T-cell (primary cell): ENCODE measurements at regions of chr17 and their contacts with region 1.

Region 1: GRCh38 chr17:1716076-1716995 is 6.2 kb upstream of the TLCD2 start:
- DNase-seq: peak; percentile 99 to 100 (median 100)
- ATAC-seq: peak; percentile 85 to 92 (median 88)
- H3K4me3 ChIP-seq: peak overlapping the region; percentile 79 to 95
- H3K4me3 Mint-ChIP-seq: peak overlapping the region; percentile 88 to 97 (median 89)
- H3K27ac ChIP-seq: peak overlapping the region; percentile 93
- H3K27ac Mint-ChIP-seq: peak overlapping the region; percentile 96 to 97
- H3K4me1 ChIP-seq: peaks cover 11 to 52% of the 10 kb centered on the region in 2 experiments
- H3K4me1 Mint-ChIP-seq: peaks cover 36 to 43% (median 38%) of the 10 kb centered on the region in 3 donors
- H3K27me3 ChIP-seq: peaks cover 0 to 26% of the 10 kb centered on the region in 2 experiments
- H3K27me3 Mint-ChIP-seq: peaks cover 0 to 3% of the 10 kb centered on the region in 2 donors

Region 2: GRCh38 chr17:1648963-1649843 is 67.1 kb before region 1 on chr17:
- CTCF ChIA-PET with region 1: interaction called in 1 of 2 experiments, 16 read pairs
- POLR2A ChIA-PET with region 1: interaction called in 1 of 2 experiments, 3 read pairs
- DNase-seq: peak; percentile 84 to 99 (median 92)
- ATAC-seq: peak; percentile 79 to 84 (median 80)
- H3K4me3 ChIP-seq: peak overlapping the region; percentile 40 to 41
- H3K4me3 Mint-ChIP-seq: peak overlapping the region; percentile 58 to 68 (median 65)
- H3K27ac ChIP-seq: peak overlapping the region; percentile 41
- H3K27ac Mint-ChIP-seq: no peak overlapping the region
- H3K4me1 ChIP-seq: peaks cover 11 to 41% of the 10 kb centered on the region in 2 experiments
- H3K4me1 Mint-ChIP-seq: peaks cover 18 to 34% (median 22%) of the 10 kb centered on the region in 3 donors
- H3K27me3 ChIP-seq: peaks cover 0 to 12% of the 10 kb centered on the region in 2 experiments
- H3K27me3 Mint-ChIP-seq: no peaks in the 10 kb centered on the region

Region 3: DNA sequence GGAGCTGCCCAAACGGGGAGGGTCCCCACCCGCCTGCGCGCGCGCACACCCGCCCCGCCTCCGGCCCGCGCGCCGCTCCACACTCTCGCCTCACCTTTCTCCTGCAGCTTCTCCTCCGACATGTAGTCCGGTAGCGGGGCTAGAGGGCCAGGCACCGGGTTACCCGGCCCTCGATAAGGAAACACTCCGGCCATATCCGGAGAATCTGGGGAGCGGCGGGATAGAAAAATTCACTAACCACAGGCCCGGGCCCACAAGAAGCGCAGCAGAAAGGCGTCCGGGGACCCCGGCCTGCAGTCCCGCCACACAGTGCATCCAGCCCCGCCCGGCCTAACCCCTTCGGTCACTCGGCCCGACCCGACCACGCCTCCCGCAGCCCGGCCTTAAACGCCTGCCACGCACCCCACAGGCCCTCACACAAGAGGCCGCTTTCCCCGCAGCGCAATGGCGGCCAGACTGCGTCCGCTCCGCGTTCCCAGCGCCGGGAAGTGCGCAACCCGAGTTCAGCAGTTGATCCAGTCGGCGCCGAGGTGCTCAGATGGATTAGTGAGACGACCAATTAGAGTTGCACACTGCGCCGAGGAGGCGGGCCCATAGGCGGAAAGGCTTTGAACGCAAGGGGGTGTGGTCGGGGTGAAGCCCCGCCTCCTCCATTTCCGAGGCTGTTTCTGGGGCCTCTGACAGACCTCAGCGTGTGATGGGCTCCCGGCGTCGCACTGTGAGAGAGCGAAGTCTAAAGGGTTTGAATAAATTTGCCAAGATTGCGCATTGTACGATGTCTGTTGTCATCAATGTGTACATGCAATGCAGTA is 31.8 kb before region 1 on chr17 and contains the start of gene PRPF8:
- CTCF ChIA-PET with region 1: interaction called in 1 of 2 experiments, 6 read pairs
- POLR2A ChIA-PET with region 1: interaction called in 1 of 2 experiments, 14 read pairs
- DNase-seq: peak; percentile 94 to 99 (median 97)
- ATAC-seq: peak; percentile 98 to 99 (median 99)
- H3K4me3 ChIP-seq: peak within 1 kb of the TSS; percentile 91 to 92
- H3K4me3 Mint-ChIP-seq: peak within 1 kb of the TSS; percentile 97 to 99 (median 99)
- H3K27ac ChIP-seq: peak within 1 kb of the TSS; percentile 94
- H3K27ac Mint-ChIP-seq: peak within 1 kb of the TSS; percentile 100
- H3K4me1 ChIP-seq: peaks cover 9 to 29% of the 10 kb centered on the region in 2 experiments
- H3K4me1 Mint-ChIP-seq: peaks cover 46 to 52% (median 49%) of the 10 kb centered on the region in 3 donors
- H3K27me3 ChIP-seq: no peaks in the 10 kb centered on the region
- H3K27me3 Mint-ChIP-seq: no peaks in the 10 kb centered on the region
- total RNA-seq, gene PRPF8: 387 to 543 (median 409) TPM

Region 4: GRCh38 chr17:1829592-1830257 is 113.4 kb after region 1 on chr17 and contains the starts of genes RPA1 and SMYD4:
- CTCF ChIA-PET with region 1: interaction called in 1 of 2 experiments, 3 read pairs
- POLR2A ChIA-PET with region 1: interaction called in 1 of 2 experiments, 12 read pairs
- DNase-seq: peak; percentile 75 to 94 (median 84)
- ATAC-seq: peak; percentile 99 to 100 (median 99)
- H3K4me3 ChIP-seq: peak within 1 kb of the TSS; percentile 80 to 84
- H3K4me3 Mint-ChIP-seq: peak within 1 kb of the TSS; percentile 93 to 99 (median 94)
- H3K27ac ChIP-seq: peak within 1 kb of the TSS; percentile 65
- H3K27ac Mint-ChIP-seq: peak within 1 kb of the TSS; percentile 89 to 96
- H3K4me1 ChIP-seq: peaks cover 8 to 52% of the 10 kb centered on the region in 2 experiments
- H3K4me1 Mint-ChIP-seq: peaks cover 60 to 69% (median 68%) of the 10 kb centered on the region in 3 donors
- H3K27me3 ChIP-seq: no peaks in the 10 kb centered on the region
- H3K27me3 Mint-ChIP-seq: no peaks in the 10 kb centered on the region
- total RNA-seq, gene RPA1: 78.9 to 124 (median 107) TPM
- total RNA-seq, gene SMYD4: 24.4 to 42.7 (median 38.5) TPM

Region 5: GRCh38 chr17:1865252-1866037 is 149.1 kb after region 1 on chr17:
- CTCF ChIA-PET with region 1: interaction called in 1 of 2 experiments, 4 read pairs
- POLR2A ChIA-PET with region 1: interaction called, 3 to 19 read pairs
- DNase-seq: peak in 33 of 35 experiments; percentile 12 to 80 (median 43)
- ATAC-seq: peak; percentile 43 to 65 (median 52)
- H3K4me3 ChIP-seq: no peak overlapping the region
- H3K4me3 Mint-ChIP-seq: no peak overlapping the region
- H3K27ac ChIP-seq: no peak overlapping the region
- H3K27ac Mint-ChIP-seq: no peak overlapping the region
- H3K4me1 ChIP-seq: peaks cover 7 to 9% of the 10 kb centered on the region in 2 experiments
- H3K4me1 Mint-ChIP-seq: peaks cover 13 to 26% (median 22%) of the 10 kb centered on the region in 3 donors
- H3K27me3 ChIP-seq: no peaks in the 10 kb centered on the region
- H3K27me3 Mint-ChIP-seq: no peaks in the 10 kb centered on the region

Region 6: GRCh38 chr17:1878419-1879121 is 162.2 kb after region 1 on chr17:
- CTCF ChIA-PET with region 1: no interaction called
- POLR2A ChIA-PET with region 1: no interaction called
- DNase-seq: no peak
- ATAC-seq: no peak
- H3K4me3 ChIP-seq: no peak overlapping the region
- H3K4me3 Mint-ChIP-seq: no peak overlapping the region
- H3K27ac ChIP-seq: no peak overlapping the region
- H3K27ac Mint-ChIP-seq: peak overlapping the region in 1 of 2 donors; percentile 46
- H3K4me1 ChIP-seq: peaks cover 6% of the 10 kb centered on the region in 2 experiments
- H3K4me1 Mint-ChIP-seq: peaks cover 20 to 30% (median 21%) of the 10 kb centered on the region in 3 donors
- H3K27me3 ChIP-seq: no peaks in the 10 kb centered on the region
- H3K27me3 Mint-ChIP-seq: no peaks in the 10 kb centered on the region